ENCODE measurements at regions of chr15 and their contacts with region 1.

Region 1: DNA sequence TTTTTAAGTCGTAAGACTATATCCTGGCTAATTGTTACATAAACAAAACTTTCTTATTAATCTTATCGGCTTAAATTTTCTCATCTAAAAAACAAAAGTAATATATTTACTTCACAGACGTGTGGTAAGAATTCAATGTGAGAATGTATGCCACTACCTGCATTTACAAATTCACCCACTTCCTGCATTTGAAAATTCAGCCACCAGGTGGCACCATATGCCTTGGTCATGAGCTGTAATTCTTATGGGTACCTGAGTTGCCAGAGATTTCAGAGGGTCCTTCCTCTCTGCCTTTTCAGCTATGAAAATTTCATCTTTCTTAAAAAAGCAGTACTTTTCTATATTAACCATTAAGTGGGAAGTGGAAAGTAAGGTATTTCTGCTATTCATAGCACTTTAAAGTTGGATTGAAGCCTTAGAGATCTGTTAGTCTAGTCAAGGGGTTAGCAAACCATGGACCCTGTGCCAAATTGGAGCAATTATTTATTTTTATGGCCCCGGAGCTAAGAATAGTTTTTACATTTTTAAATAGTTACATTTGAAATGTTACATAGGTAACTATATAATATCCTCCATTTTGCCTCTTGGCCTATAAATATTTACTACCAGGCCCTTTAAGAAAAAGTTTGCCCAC is 127.8 kb downstream of the HCN4 start:
- DNase-seq: peak; percentile 84
- H3K4me3 Mint-ChIP-seq: no peak overlapping the region
- H3K27ac Mint-ChIP-seq: no peak overlapping the region
- H3K4me1 Mint-ChIP-seq: peaks cover 8% of the 10 kb centered on the region
- H3K27me3 Mint-ChIP-seq: no peaks in the 10 kb centered on the region

Region 2: DNA sequence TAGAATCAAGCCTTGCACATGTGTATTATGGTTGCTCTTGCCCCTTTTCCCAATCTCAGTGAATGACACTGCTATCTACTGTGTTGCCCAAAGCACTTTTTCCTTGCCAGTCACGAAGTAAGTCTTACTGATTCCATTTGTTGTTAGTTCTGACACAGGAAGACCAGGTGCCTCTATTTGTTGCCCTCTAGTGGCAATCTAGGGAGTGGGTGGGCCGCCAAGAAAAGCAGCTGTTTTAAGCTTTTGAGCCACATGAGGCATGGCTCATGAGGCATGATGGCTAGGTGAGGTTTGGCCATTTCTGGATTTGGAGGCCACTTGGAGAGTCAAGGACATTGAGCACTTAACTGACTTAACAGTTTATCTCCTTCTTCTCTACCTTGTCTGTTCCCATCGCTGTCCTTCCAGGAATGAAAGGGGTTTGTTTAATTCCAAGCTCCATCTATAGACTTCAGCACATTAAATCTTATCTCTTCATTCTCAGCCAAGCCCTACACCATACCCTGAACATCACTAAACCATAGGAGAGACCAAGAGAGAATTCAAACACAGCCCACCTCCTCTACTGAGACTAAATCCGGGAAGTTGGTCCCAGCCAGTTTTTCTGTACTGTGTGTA is 24.7 kb after region 1 on chr15:
- CTCF ChIA-PET with region 1: interaction called, 17 read pairs
- POLR2A ChIA-PET with region 1: interaction called, 6 read pairs
- DNase-seq: peak; percentile 54
- H3K4me3 Mint-ChIP-seq: no peak overlapping the region
- H3K27ac Mint-ChIP-seq: no peak overlapping the region
- H3K4me1 Mint-ChIP-seq: no peaks in the 10 kb centered on the region
- H3K27me3 Mint-ChIP-seq: no peaks in the 10 kb centered on the region